Naive thymus-derived CD4-positive, alpha-beta T cell (primary cell): ENCODE measurements at regions of chr5 and their contacts with region 1.

Region 1: DNA sequence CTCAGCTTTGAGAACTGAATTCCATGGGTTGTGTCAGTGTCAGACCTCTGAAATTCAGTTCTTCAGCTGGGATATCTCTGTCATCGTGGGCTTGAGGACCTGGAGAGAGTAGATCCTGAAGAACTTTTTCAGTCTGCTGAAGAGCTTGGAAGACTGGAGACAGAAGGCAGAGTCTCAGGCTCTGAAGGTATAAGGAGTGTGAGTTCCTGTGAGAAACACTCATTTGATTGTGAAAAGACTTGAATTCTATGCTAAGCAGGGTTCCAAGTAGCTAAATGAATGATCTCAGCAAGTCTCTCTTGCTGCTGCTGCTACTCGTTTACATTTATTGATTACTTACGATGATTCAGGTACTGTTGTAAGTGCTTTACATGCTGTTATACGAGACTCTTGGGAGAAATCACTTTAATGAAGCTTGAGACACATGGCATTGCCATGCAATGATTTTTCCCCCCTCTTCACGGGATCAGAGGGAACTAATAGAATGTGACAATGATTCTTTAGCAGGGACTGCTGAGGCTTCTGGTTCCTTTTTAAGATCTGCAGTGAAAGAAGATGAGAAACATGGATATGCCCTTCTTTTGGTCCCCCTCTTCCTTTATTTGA is 63.8 kb downstream of the PTTG1 start:
- DNase-seq: no peak
- ATAC-seq: no peak
- H3K4me3 ChIP-seq: no peak overlapping the region
- H3K4me3 Mint-ChIP-seq: no peak overlapping the region
- H3K27ac ChIP-seq: no peak overlapping the region
- H3K27ac Mint-ChIP-seq: peak overlapping the region in 2 of 9 donors; percentile 14 to 30
- H3K4me1 ChIP-seq: peaks cover 0 to 23% of the 10 kb centered on the region in 2 donors
- H3K4me1 Mint-ChIP-seq: peaks cover 0 to 55% (median 0%) of the 10 kb centered on the region in 7 donors
- H3K27me3 ChIP-seq: no peaks in the 10 kb centered on the region
- H3K27me3 Mint-ChIP-seq: no peaks in the 10 kb centered on the region

Region 2: GRCh38 chr5:160467555-160468362 is 17.7 kb before region 1 on chr5:
- CTCF ChIA-PET with region 1: no interaction called
- POLR2A ChIA-PET with region 1: interaction called, 3 read pairs
- intact Hi-C with region 1: loop called in 1 of 2 experiments (anchors 2 kb)
- DNase-seq: peak; percentile 24 to 88 (median 48)
- ATAC-seq: peak; percentile 91
- H3K4me3 ChIP-seq: peak overlapping the region; percentile 69
- H3K4me3 Mint-ChIP-seq: peak overlapping the region; percentile 80 to 100 (median 88)
- H3K27ac ChIP-seq: peak overlapping the region; percentile 48
- H3K27ac Mint-ChIP-seq: peak overlapping the region; percentile 73 to 99 (median 81)
- H3K4me1 ChIP-seq: peaks cover 28 to 34% of the 10 kb centered on the region in 2 donors
- H3K4me1 Mint-ChIP-seq: peaks cover 36 to 79% (median 70%) of the 10 kb centered on the region in 7 donors
- H3K27me3 ChIP-seq: no peaks in the 10 kb centered on the region
- H3K27me3 Mint-ChIP-seq: no peaks in the 10 kb centered on the region